ENCODE measurements at regions of chr16 and their contacts with region 1.

Region 1: GRCh38 chr16:75402821-75403475 is 30.4 kb downstream of the CFDP1 start:
- DNase-seq: peak; percentile 46
- CTCF ChIP-seq: peak; percentile 53

Region 2: GRCh38 chr16:75227361-75228142 is 175.4 kb before region 1 on chr16:
- CTCF ChIA-PET with region 1: interaction called, 41 read pairs
- POLR2A ChIA-PET with region 1: no interaction called
- DNase-seq: no peak
- CTCF ChIP-seq: no peak

Region 3: GRCh38 chr16:75392911-75393310 is 10.0 kb before region 1 on chr16:
- CTCF ChIA-PET with region 1: interaction called, 17 read pairs
- POLR2A ChIA-PET with region 1: interaction called, 3 read pairs
- DNase-seq: no peak
- CTCF ChIP-seq: no peak

Region 4: GRCh38 chr16:75415169-75415905 is 12.4 kb after region 1 on chr16:
- CTCF ChIA-PET with region 1: interaction called, 18 read pairs
- POLR2A ChIA-PET with region 1: no interaction called
- DNase-seq: no peak
- CTCF ChIP-seq: no peak

Measured in GM10248 (cell line).